K562 (cell line): ENCODE measurements at regions of chr7 and their contacts with region 1.

Region 1: DNA sequence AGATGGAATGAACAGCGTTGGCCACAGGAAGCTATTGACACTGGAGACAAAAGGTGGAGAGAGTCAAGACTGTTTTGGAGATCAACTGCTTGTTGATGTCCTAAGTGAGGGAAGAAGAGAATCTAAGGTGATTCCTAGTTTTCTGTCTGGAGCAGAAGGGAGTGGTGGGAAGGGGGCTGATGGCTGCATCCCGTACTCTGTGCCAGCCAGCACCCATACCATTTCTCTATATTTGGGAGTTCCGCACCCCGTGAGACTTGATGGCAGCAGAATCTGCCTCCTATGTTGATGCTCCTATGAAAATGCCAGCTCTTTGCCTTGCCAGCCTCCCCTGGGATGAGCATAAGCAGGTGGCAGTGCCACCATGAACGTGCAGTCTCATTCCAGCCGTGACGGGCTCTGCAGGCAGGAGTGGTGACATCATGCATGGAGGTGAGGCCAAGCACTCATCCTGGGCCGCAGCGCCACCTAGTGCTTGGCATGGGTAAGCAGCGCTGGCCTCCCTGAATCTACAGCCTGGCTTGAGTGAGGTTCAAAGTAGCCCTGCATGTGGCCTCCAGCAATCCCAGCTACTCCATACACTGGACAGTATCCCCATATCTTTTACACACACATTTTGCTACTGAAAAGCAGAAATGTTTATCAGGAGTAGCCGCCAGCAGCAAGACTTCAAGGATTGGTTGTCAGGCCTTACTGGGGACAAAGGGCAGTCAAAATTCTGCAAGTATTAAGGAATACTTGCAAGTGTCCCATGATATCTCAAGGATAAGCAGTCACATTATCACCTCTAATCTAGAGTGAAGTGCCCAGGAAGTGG is 43.0 kb downstream of the PODXL start:
- DNase-seq: peak; percentile 87 to 97 (median 94)
- ATAC-seq: peak; percentile 99
- H3K4me3 ChIP-seq: no peak overlapping the region
- H3K27ac ChIP-seq: no peak overlapping the region
- H3K4me1 ChIP-seq: peaks cover 0 to 2% of the 10 kb centered on the region in 2 experiments; a peak in 1 of 5 replicates
- H3K27me3 ChIP-seq: peaks cover 43 to 52% of the 10 kb centered on the region in 2 experiments
- CTCF ChIP-seq: peak; percentile 96 to 99 (median 98)
- EP300 ChIP-seq: no peak
- POLR2A ChIP-seq: no peak
- RAD21 ChIP-seq: peak; percentile 83 to 92

Region 2: DNA sequence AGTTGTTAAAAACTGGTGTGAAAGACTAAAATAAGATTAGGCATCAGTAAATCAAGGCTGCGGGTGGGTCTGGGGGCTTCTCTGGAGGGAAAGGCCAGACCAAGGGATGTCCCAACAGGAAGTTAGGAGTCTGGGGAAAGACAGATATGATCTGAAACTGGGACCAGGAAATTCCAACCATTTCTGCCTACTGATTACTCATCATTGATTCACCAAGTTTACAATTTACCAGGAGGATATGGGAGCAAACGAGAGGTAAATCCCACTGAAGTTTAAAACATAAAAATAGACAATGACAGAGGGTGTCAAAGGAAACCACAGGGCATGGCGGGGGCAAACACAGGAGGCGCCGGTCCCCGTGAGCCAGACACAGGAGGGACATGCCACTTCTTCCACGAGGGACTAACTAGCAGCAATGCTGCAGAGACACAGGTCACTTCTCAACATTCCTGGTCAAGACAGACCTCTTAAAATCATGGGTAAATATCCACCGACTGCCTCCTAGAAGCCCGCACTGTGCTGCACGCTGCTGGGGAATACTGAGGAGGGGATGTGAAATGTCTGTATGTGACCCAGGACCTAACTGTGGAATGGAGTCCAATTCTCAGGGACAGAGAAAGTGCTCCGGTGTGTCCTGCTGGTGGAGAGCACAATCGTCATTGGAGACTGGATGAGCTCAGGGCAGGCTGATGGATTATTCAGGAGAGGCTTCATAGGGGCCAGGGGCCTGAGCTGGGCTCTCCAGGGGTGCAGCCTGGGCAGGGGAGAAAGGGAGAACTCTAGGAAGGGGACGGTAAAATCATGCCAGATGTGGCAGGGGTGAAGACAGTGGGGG is 626.1 kb before region 1 on chr7:
- CTCF ChIA-PET with region 1: no interaction called
- POLR2A ChIA-PET with region 1: interaction called, 3 read pairs
- in situ Hi-C with region 1: loop called (anchors 10 kb)
- intact Hi-C with region 1: no loop called
- DNase-seq: no peak
- ATAC-seq: no peak; the same call in 2 of the 3 replicates
- H3K4me3 ChIP-seq: no peak overlapping the region
- H3K27ac ChIP-seq: no peak overlapping the region
- H3K4me1 ChIP-seq: peaks cover 0 to 6% of the 10 kb centered on the region in 2 experiments; a peak in 2 of 5 replicates
- H3K27me3 ChIP-seq: no peaks in the 10 kb centered on the region
- CTCF ChIP-seq: no peak
- EP300 ChIP-seq: no peak
- POLR2A ChIP-seq: no peak
- RAD21 ChIP-seq: no peak

Region 3: DNA sequence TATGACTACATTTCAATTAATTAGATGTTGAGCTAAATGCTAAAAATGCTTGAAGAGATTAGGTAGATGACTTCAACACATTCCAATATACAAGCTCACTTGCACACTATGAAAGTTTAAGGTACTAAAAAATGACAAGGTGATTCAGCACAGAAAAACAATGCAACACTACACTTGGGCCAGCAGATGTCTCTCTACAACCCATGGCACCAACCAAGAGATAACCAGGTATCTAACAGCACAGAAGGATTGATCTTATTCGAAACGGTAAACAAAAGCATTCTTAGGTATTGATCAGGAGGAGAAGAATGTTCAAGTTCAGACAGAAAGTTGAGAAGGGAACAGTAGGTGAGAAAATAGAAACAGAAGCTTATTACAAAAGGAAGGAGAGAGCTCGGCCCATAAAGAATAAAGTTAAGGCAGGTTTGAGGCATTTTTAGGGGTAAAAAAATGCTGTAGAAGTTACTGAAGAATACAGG is 531.3 kb before region 1 on chr7:
- CTCF ChIA-PET with region 1: no interaction called
- POLR2A ChIA-PET with region 1: no interaction called
- in situ Hi-C with region 1: no loop called
- intact Hi-C with region 1: loop called (anchors 1 kb)
- DNase-seq: peak; percentile 46 to 68 (median 58)
- ATAC-seq: peak; percentile 96
- H3K4me3 ChIP-seq: no peak overlapping the region
- H3K27ac ChIP-seq: no peak overlapping the region
- H3K4me1 ChIP-seq: no peaks in the 10 kb centered on the region; a peak in 1 of 5 replicates
- H3K27me3 ChIP-seq: no peaks in the 10 kb centered on the region
- CTCF ChIP-seq: peak; percentile 74 to 92 (median 84)
- EP300 ChIP-seq: peak; percentile 8; the same call in 1 of the 2 replicates
- POLR2A ChIP-seq: no peak
- RAD21 ChIP-seq: peak; percentile 79 to 89

Region 4: DNA sequence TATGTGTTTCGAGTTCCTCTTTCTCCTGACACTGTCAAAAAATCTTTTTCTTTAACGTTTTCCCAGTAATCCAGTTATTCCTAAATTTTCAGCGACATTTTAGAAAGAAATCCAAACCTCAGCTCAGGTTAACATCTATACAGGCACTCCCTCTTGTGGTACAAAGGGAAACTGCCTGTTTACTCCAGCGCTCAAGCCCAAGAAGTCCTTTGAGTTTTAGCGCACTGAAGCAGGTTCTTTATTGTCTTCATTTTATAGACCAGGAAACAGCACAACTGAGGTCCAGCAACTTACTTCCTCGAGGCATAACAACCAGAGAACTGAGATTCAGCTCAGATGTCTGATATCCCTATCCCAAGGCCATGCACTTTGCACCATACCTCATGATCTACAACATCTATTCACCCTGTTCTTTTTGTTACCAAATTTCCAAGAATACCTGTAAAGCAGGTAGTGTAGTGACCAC is 473.0 kb before region 1 on chr7:
- CTCF ChIA-PET with region 1: no interaction called
- POLR2A ChIA-PET with region 1: no interaction called
- in situ Hi-C with region 1: no loop called
- intact Hi-C with region 1: loop called (anchors 10 kb)
- DNase-seq: peak; percentile 72 to 81 (median 77)
- ATAC-seq: peak; percentile 95
- H3K4me3 ChIP-seq: no peak overlapping the region
- H3K27ac ChIP-seq: no peak overlapping the region
- H3K4me1 ChIP-seq: no peaks in the 10 kb centered on the region; a peak in 2 of 5 replicates
- H3K27me3 ChIP-seq: no peaks in the 10 kb centered on the region
- CTCF ChIP-seq: peak; percentile 91 to 98 (median 96)
- EP300 ChIP-seq: no peak
- POLR2A ChIP-seq: no peak
- RAD21 ChIP-seq: peak; percentile 90 to 95

Region 5: GRCh38 chr7:131071786-131072504 is 441.5 kb before region 1 on chr7:
- CTCF ChIA-PET with region 1: no interaction called
- POLR2A ChIA-PET with region 1: no interaction called
- in situ Hi-C with region 1: no loop called
- intact Hi-C with region 1: loop called (anchors 5 kb)
- DNase-seq: peak; percentile 61 to 99 (median 67)
- ATAC-seq: peak; percentile 90
- H3K4me3 ChIP-seq: peak overlapping the region; percentile 15; the same call in 1 of the 2 replicates
- H3K27ac ChIP-seq: peak overlapping the region; percentile 80
- H3K4me1 ChIP-seq: peaks cover 10 to 34% of the 10 kb centered on the region in 2 experiments
- H3K27me3 ChIP-seq: no peaks in the 10 kb centered on the region
- CTCF ChIP-seq: peak; percentile 10 to 71 (median 55); a peak in 5 of 6 replicates
- EP300 ChIP-seq: peak; percentile 64
- POLR2A ChIP-seq: peak; percentile 63; the same call in 1 of the 2 replicates
- RAD21 ChIP-seq: peak; percentile 53 to 56; a peak in 3 of 4 replicates